RWPE1 (cell line): ENCODE measurements at regions of chr1 and their contacts with region 1.

Region 1: DNA sequence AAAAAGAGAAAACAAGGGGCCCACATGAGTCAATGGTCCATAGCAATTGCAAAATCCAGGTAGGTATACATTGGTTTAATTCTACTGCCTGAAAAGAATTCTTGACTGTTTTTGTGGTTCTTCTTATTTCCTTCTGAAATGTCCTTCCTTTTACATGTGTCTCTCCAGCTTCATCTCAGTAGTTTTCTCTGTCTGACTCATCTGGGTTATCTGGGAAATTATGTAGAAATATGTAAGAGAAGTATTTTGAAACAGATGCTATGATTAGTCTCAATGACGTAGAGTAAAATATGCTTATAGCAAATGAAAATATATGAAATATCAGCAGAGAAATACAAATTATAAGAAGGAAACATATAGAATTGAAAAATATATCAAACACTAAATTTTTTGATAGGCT is 953.2 kb downstream of the BRINP3 start:
- DNase-seq: no peak
- H3K27ac ChIP-seq: no peak overlapping the region
- CTCF ChIP-seq: no peak

Region 2: DNA sequence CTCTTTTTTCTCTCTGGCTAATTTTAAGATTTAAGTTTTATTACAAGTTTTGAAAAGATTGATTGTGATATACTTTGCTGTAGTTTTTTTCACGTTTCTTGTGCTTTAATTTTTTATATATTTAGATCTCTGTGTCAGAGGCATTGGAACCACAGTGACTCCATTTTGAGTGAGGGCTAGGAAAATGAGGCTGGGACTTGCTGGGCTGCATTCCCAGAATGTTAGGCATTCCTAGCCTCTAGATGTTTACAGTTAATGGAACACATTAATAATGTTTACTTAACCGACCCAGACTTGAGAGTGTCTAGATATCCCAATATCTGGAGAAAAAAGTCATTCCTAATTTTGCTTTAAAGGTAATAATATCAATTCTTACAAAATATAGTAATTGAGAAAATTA is 13.8 kb after region 1 on chr1:
- CTCF ChIA-PET with region 1: no interaction called
- POLR2A ChIA-PET with region 1: no interaction called
- DNase-seq: no peak
- H3K27ac ChIP-seq: no peak overlapping the region
- CTCF ChIP-seq: no peak

Region 3: GRCh38 chr1:189550498-189550897 is 26.0 kb after region 1 on chr1:
- CTCF ChIA-PET with region 1: no interaction called
- POLR2A ChIA-PET with region 1: interaction called, 11 read pairs
- DNase-seq: no peak
- H3K27ac ChIP-seq: no peak overlapping the region
- CTCF ChIP-seq: no peak